Right ventricle myocardium inferior (tissue), 1 donor: ENCODE measurements at regions of chr14 and their contacts with region 1.

Region 1: GRCh38 chr14:34569750-34570149 is 30.2 kb upstream of the EAPP start:
- DNase-seq: no peak
- ATAC-seq: no peak

Region 2: DNA sequence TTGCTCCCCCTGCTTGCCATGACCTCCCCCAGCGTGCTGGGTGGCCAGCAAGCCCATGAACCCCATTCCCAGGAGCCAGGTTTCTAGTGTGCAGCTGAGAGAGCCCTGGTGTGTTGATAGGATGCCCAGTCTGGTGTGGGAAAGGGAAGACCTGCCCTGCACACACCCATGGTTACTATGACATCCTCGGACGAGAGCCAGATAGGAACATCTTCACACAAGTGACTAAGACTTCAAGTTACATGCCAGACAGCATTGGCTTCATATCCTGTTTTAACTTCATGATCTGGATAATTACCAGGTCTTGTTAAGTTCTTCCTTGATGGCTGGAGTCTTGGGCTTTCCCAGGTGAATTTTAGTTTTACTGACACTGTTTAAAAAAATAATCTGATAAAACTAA is 422.3 kb before region 1 on chr14:
- intact Hi-C with region 1: no loop called
- DNase-seq: no peak
- ATAC-seq: no peak

Region 3: DNA sequence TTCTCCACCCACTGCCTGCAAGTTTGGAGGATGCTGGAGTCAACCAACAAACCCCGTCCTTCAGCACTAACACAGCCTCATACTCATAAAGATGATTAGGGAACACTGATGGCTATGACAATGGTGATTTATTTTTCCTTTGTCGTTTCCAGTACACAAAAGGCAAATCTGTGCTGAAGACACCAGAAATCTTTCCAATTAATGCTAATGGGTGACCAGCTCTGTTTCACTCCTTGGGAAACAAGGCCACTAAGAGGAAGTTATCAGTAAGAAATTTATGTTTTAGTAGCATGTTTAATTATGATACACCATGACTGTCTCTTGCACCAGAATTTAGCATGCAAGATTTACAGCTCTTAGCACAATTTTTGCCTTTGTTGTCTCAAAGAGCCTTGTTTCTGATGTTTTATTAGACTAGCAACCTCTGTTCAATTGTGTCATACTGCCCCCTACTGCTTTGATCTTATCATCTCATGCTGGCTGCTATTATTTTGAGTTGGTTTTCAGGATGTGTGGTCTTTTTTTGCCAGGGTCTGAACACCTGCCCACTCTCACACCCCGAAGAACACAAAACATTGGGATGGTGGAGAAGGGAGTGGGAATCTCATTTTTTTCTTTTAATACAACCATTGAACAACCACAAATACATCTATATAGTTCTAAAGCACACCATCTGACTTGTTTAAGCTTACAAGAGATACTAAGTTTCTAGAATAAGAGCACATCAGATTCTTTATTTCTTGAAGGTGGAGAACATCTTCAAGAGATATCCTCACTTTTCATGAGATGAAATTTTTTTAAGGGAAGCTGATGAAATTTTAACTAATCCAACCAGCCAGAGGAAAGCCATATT is 268.6 kb before region 1 on chr14:
- intact Hi-C with region 1: no loop called
- DNase-seq: no peak
- ATAC-seq: peak; percentile 43

Region 4: GRCh38 chr14:34522496-34522895 is 47.3 kb before region 1 on chr14:
- intact Hi-C with region 1: loop called (anchors 10 kb)
- DNase-seq: no peak
- ATAC-seq: no peak